A673 (cell line): ENCODE measurements at regions of chr17 and their contacts with region 1.

Region 1: GRCh38 chr17:82507631-82508175 is 11.8 kb upstream of the FOXK2 start:
- DNase-seq: no peak
- H3K4me3 ChIP-seq: no peak overlapping the region
- H3K27ac ChIP-seq: no peak overlapping the region
- H3K4me1 ChIP-seq: no peaks in the 10 kb centered on the region
- H3K27me3 ChIP-seq: no peaks in the 10 kb centered on the region
- CTCF ChIP-seq: no peak

Region 2: DNA sequence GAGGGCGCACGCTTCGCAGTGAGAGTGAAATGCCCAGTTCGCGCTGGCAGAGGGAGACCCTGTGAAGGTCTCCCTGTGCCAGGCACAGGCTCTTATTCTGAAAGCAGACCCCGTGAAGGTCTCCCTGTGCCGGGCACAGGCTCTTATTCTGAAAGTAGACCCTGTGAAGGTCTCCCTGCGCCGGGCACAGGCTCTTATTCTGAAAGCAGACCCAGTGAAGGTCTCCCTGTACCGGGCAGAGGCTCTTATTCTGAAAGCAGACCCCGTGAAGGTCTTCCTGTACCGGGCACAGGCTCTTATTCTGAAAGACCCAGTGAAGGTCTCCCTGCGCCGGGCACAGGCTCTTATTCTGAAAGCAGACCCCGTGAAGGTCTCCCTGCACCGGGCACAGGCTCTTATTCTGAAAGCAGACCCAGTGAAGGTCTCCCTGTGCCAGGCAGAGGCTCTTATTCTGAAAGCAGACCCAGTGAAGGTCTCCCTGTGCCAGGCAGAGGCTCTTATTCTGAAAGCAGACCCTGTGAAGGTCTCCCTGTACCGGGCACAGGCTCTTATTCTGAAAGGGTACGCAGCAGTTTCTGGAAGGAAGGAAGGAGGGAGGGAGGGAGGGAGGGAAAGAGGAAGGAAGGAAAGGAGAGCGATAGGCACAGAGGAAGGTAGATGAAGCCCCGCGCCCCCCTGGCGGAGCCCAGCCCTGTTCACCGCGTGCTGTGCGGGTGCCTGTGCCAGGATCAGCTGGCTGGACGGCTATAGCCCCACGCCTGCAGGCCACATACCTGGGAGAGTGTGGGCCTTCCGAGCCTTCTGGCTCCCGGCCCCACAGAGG is 85.3 kb after region 1 on chr17:
- CTCF ChIA-PET with region 1: no interaction called
- POLR2A ChIA-PET with region 1: no interaction called
- intact Hi-C with region 1: no loop called
- DNase-seq: peak; percentile 89
- H3K4me3 ChIP-seq: peak overlapping the region; percentile 36
- H3K27ac ChIP-seq: peak overlapping the region; percentile 84
- H3K4me1 ChIP-seq: peaks cover 11% of the 10 kb centered on the region
- H3K27me3 ChIP-seq: no peaks in the 10 kb centered on the region
- CTCF ChIP-seq: no peak

Region 3: DNA sequence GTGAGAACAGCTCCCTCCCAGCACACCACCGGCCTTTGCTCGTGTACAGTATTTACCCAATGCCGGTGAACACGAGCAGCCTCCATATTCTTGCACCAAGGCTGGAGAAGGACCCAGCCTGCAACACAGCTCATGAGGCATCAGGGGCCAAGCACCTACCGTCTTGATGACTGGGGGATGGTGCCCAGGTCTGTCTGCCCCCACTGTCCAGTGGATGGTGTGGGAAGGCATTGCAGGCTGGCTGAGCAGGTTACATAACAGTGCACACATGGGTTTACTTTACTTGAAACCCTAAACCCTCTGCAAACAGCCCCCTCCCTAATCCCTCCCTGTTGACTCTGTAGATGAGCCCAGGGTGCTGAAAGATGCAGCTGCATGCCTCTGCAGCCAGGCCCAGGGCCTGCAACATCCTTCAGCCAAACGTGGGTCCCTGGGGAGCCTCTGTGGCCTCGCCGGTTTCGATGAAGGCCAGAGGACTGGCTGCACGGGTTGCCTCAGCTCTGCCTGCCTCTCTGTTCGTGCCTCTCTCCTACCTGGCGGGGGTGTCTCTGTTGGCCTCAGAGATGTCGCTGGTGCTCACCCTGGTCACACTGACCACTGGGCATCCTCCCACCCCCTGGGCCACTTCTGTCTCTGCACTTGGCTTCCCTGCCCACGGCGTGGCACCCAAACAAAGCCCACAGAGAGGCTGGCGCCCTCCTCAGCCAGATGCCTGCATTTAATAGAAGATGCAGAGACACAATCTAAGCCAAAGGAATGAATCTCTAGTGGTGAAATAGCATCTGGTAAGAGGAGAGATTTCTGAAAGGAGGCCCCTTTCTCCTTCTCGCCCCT is 666.8 kb after region 1 on chr17:
- CTCF ChIA-PET with region 1: no interaction called
- POLR2A ChIA-PET with region 1: interaction called, 14 read pairs
- intact Hi-C with region 1: no loop called
- DNase-seq: no peak
- H3K4me3 ChIP-seq: no peak overlapping the region
- H3K27ac ChIP-seq: no peak overlapping the region
- H3K4me1 ChIP-seq: no peaks in the 10 kb centered on the region
- H3K27me3 ChIP-seq: no peaks in the 10 kb centered on the region
- CTCF ChIP-seq: 0 out of 2 replicates have a peak, but pooled peaks have one; percentile 20